ENCODE measurements at regions of chr7 and their contacts with region 1.

Region 1: GRCh38 chr7:106736508-106737201 is 75.7 kb upstream of the CCDC71L start:
- DNase-seq: no peak
- ATAC-seq: no peak

Region 2: DNA sequence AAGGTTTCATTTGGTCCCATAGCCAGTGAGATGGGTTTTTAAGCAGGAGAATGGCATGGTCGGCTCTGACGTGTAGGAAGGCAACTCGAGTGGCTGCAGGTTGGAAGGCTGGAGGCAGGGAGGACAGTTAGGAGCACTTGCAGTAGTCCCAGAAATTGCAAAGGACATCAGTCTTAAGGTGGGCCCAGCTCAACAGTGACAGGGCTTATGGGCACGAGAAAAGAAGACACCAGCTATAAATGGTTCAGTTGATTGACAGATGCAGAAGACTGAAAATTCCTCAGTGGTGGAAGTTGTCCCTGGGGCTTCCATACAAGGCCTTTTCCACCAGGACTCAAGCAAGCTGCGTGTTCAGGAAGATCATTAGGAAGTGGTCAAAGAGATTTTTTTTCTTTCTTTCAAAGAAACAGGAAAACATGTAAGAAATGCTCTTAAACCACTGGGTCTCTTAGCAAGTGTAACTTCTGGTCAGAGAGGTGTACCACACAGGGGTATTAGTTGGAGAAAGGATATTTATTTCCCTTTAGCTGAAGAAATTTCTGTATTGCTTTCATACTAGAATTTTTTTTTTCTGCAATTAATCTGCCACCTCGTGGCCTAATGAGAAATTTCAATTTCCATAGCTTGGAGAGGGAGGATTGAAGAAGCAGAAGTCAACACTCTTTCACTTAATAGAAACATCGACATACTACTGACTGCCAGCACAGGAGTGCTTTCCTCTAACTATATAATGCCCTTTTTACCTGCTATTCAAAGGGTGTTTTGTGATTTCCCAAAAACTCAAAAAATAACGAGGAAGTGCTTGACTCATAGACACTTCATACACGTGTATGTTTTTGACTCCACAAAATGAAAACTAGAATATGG is 274.4 kb before region 1 on chr7:
- intact Hi-C with region 1: loop called (anchors 10 kb)
- DNase-seq: no peak
- ATAC-seq: no peak

Region 3: GRCh38 chr7:106542550-106543220 is 194.0 kb before region 1 on chr7:
- intact Hi-C with region 1: loop called (anchors 2 kb)
- DNase-seq: no peak
- ATAC-seq: peak; percentile 81

Region 4: GRCh38 chr7:106659963-106660861 is 76.4 kb before region 1 on chr7:
- intact Hi-C with region 1: loop called (anchors 2 kb)
- DNase-seq: peak; percentile 91
- ATAC-seq: peak; percentile 56

Region 5: DNA sequence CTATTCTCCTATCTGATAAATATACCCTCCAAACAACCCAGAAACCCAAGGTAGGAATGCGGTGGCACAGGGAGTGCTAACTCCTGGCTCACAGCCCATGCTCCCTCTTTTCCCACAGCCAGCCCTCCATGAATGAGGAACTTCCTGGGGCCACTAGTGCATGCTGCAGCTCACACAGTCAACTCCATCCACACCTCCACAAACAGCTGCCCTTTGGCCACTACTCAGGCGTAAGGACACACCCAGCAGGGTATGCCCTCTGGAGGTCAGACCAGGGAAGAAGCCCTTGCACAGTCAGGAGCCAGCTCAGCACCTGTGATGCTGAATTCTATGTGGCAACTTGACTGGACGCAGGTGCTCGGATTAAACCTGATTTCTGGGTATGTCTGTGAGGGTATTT is 43.2 kb after region 1 on chr7:
- intact Hi-C with region 1: no loop called
- DNase-seq: no peak
- ATAC-seq: no peak

Measured in Right ventricle myocardium inferior (tissue), 1 donor.